Sigmoid colon (tissue), 7 donors: ENCODE measurements at regions of chr1 and their contacts with region 1.

Region 1: DNA sequence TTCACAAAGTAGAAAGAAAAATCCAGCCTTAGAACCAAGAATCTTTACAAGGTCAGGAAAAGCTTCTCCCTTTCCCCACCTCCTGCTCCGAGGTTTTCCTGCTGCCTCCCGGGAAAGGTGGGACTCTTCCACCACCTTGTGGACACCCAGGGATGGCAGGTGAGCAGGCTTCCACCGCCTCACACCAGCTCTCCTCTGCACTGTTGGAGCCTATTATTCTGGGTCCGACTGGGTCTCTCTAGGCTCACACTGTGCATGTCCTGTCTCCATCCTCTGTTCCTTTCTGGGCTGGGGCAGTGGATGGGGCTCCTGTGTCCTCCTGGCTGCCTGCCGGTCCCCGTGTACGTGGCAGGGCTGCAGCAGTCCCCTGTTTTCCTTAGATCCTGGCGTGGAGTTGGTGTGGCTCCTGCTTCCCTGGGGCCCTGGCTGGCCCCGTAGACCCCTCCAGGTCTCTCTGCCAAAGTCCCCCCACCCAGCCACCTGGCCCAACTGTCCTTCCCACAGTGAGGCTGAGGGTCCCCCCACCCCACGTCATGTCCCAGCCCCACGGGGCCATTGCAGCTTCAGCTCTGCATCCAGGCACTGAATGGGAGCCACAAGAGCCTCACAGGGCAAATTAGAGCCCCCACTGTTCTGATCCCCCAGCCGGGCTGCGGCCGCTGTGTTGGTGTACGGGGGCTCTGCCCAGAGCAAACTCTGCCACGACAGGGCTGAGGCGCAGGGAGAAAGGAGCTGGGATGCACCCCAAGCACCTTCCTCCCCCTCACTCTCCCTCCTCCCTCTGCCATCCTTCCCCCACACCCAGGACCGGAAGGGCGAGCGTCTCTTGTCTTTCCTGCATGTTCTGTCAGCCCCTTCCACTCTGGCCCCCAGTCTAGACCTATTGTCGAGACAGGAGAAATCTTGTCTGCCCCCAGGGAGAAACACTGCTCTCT is 3.3 kb upstream of the SLC45A1 start:
- DNase-seq: peak; percentile 92
- H3K4me3 ChIP-seq: no peak overlapping the region
- H3K27ac ChIP-seq: peak overlapping the region in 1 of 4 donors; percentile 11
- H3K4me1 ChIP-seq: peaks cover 0 to 36% (median 28%) of the 10 kb centered on the region in 4 donors
- H3K27me3 ChIP-seq: no peaks in the 10 kb centered on the region
- CTCF ChIP-seq: peak; percentile 83 to 97 (median 95)
- EP300 ChIP-seq: no peak
- POLR2A ChIP-seq: no peak

Region 2: DNA sequence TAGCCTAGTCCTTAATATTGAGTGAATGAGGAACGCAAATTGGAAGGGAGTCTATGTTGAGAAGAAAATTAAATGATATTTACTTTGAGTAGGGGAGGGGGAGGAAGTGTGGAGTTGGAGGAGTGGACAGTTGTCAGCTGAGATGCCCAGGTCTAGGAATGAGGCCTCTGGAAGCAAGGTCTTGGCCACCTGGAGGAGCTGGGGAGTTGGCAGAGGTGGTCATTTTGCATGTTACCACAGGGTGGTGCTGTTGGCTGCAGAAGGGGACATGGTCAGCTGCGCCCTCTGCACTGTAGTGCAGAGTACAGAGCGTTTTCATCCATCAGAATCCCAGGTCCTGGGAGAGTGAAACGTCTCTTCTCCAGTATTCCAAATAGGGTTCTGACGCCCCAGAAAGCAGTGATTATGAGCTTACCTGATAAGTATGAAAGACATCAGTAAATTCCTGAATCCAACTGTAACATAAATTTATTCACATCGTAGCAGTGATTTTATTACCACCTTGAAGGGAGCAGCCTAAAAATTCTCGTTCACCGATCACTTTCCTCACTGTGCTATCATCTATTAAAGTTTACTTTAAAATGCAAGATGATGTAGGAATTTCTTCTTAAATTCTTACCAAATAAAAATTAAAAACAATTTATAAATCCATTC is 339.3 kb before region 1 on chr1:
- intact Hi-C with region 1: loop called (anchors 2 kb)
- DNase-seq: peak; percentile 85
- H3K4me3 ChIP-seq: no peak overlapping the region
- H3K27ac ChIP-seq: peak overlapping the region in 3 of 4 donors; percentile 50 to 71 (median 54)
- H3K4me1 ChIP-seq: peaks cover 0 to 16% (median 2%) of the 10 kb centered on the region in 4 donors
- H3K27me3 ChIP-seq: no peaks in the 10 kb centered on the region
- CTCF ChIP-seq: peak; percentile 81 to 89 (median 84)
- EP300 ChIP-seq: no peak
- POLR2A ChIP-seq: no peak

Region 3: GRCh38 chr1:7983086-7983778 is 331.4 kb before region 1 on chr1:
- intact Hi-C with region 1: loop called (anchors 1 kb)
- DNase-seq: no peak
- H3K4me3 ChIP-seq: no peak overlapping the region
- H3K27ac ChIP-seq: no peak overlapping the region
- H3K4me1 ChIP-seq: peaks cover 0 to 7% (median 1%) of the 10 kb centered on the region in 4 donors
- H3K27me3 ChIP-seq: no peaks in the 10 kb centered on the region
- CTCF ChIP-seq: no peak
- EP300 ChIP-seq: no peak
- POLR2A ChIP-seq: no peak

Region 4: GRCh38 chr1:8026153-8026975 is 288.2 kb before region 1 on chr1 and contains the start of gene ERRFI1:
- intact Hi-C with region 1: loop called (anchors 1 kb)
- DNase-seq: peak; percentile 98
- H3K4me3 ChIP-seq: peak within 1 kb of the TSS; percentile 63 to 97 (median 84)
- H3K27ac ChIP-seq: peak within 1 kb of the TSS; percentile 96 to 99 (median 97)
- H3K4me1 ChIP-seq: peaks cover 3 to 61% (median 54%) of the 10 kb centered on the region in 4 donors
- H3K27me3 ChIP-seq: no peaks in the 10 kb centered on the region
- CTCF ChIP-seq: no peak
- EP300 ChIP-seq: no peak
- POLR2A ChIP-seq: peak; percentile 71 to 85
- total RNA-seq, gene ERRFI1: 81.1 to 131 (median 101) TPM

Region 5: GRCh38 chr1:8137481-8138244 is 176.9 kb before region 1 on chr1:
- intact Hi-C with region 1: loop called (anchors 10 kb)
- DNase-seq: peak; percentile 85
- H3K4me3 ChIP-seq: no peak overlapping the region
- H3K27ac ChIP-seq: peak overlapping the region; percentile 85 to 93 (median 89)
- H3K4me1 ChIP-seq: peaks cover 0 to 73% (median 57%) of the 10 kb centered on the region in 4 donors
- H3K27me3 ChIP-seq: no peaks in the 10 kb centered on the region
- CTCF ChIP-seq: no peak
- EP300 ChIP-seq: no peak
- POLR2A ChIP-seq: no peak

Region 6: DNA sequence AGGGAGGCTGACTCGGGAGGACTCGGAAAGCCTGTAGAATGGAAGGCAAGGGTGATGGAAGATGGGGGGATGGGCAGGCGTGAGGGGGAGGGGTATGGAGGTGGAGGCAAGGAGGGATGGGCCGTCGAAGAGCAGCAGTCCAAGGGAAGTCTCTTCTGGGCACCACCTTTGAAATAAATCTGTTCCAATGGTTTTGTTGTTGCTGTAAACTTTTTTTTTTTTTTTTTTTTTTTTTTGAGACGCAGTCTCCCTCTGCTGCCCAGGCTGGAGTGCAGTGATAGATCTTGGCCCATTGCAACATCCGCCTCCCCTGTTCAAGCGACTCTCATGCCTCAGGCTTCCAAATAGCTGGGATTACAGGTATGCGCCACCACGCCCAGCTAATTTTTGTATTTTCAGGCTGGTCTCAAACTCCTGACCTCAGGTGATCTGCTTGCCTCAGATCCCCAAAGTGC is 75.7 kb before region 1 on chr1:
- intact Hi-C with region 1: loop called (anchors 5 kb)
- DNase-seq: peak; percentile 82
- H3K4me3 ChIP-seq: no peak overlapping the region
- H3K27ac ChIP-seq: peak overlapping the region; percentile 58 to 80 (median 61)
- H3K4me1 ChIP-seq: peaks cover 0 to 21% (median 10%) of the 10 kb centered on the region in 4 donors
- H3K27me3 ChIP-seq: no peaks in the 10 kb centered on the region
- CTCF ChIP-seq: no peak
- EP300 ChIP-seq: no peak
- POLR2A ChIP-seq: no peak

Region 7: DNA sequence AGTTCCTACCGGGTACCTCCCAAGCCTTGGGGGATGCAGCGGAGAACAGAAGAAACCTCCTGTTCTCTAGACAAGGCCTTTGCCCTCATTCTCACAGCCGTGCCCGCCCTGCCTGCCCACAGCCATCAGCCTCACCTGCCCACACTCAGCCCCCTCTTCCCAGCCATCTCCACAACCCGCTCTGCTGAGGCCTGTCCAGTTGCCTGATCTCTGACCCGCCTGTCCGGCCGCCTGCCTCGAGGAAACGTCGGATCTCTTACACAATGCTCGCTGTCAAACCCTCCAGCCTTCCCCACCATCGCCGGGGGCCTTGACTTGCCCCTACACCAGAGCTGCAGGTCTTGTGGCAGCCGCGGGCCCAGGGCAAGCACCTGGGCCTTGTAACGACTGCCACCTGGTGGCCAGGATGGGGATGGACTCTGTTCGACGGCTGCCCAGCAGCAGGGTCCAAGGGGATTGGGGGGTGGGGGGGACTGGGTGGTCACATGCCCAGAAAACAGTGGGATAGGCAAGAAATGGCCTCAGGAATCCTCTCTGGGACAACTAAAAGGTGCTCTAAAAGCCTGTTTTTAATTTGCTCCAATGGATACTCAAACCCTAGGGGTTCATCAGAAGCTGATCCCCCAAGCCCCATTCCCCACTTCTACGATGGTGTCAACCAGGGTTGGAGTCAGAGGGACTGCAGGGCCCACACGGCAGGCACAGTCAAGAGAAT is 34.3 kb after region 1 on chr1:
- intact Hi-C with region 1: loop called (anchors 2 kb)
- DNase-seq: no peak
- H3K4me3 ChIP-seq: no peak overlapping the region
- H3K27ac ChIP-seq: peak overlapping the region in 3 of 4 donors; percentile 16 to 76 (median 74)
- H3K4me1 ChIP-seq: peaks cover 0 to 55% (median 40%) of the 10 kb centered on the region in 4 donors
- H3K27me3 ChIP-seq: no peaks in the 10 kb centered on the region
- CTCF ChIP-seq: peak; percentile 78 to 94 (median 84)
- EP300 ChIP-seq: no peak
- POLR2A ChIP-seq: no peak

Region 8: DNA sequence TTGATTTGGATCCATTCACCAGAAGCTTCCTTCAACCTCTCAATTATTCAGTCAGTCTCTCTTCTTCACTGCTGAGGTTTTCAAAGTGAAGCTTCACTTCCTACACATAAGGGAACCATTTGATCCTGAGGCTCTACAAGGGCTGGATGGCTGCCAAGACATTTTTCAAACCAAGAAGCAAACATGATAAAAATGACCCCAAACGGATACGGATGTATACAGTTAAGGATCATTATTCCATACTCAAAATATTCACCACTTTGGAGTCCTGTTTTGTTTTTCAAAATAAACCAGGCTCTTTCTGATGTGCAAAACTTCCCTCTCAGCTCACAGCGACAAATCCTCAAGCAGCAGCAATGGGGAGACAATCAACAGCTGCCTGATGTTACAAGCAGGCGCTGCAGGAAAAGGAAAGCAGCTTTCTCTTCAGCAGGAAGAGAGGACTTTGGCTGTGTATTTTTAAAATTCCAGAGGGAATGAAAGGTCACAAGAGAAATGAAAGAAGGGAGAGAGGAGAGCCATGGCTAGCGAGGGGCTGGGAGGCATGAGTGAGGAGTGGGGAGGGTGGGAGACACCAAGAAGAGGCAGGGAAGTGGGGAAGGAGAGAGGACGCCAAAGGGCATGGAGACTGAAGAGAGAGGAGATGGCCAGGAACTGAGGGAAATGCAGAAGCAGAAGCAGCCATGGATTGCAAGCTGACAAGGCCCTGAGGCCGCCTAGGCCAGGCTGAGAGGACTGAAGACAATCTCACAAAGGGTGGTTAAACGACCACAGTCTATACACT is 148.7 kb after region 1 on chr1:
- intact Hi-C with region 1: no loop called
- DNase-seq: no peak
- H3K4me3 ChIP-seq: peak overlapping the region in 1 of 4 donors; percentile 3
- H3K27ac ChIP-seq: peak overlapping the region; percentile 77 to 86 (median 84)
- H3K4me1 ChIP-seq: peaks cover 0 to 82% (median 76%) of the 10 kb centered on the region in 4 donors
- H3K27me3 ChIP-seq: no peaks in the 10 kb centered on the region
- CTCF ChIP-seq: no peak
- EP300 ChIP-seq: no peak
- POLR2A ChIP-seq: no peak